ENCODE measurements at regions of chr10 and their contacts with region 1.

Region 1: GRCh38 chr10:60208676-60209269 is 180.9 kb downstream of the ANK3 start:
- DNase-seq: peak in 1 of 2 donors; percentile 58
- H3K4me3 ChIP-seq: no peak overlapping the region
- H3K27ac ChIP-seq: no peak overlapping the region
- H3K4me1 ChIP-seq: no peaks in the 10 kb centered on the region
- H3K27me3 ChIP-seq: no peaks in the 10 kb centered on the region
- CTCF ChIP-seq: peak in 5 of 7 experiments; percentile 60 to 66 (median 63)
- EP300 ChIP-seq: no peak
- POLR2A ChIP-seq: no peak

Region 2: GRCh38 chr10:60114765-60115586 is 93.8 kb before region 1 on chr10:
- intact Hi-C with region 1: loop called (anchors 10 kb)
- DNase-seq: peak in 1 of 2 donors; percentile 69
- H3K4me3 ChIP-seq: no peak overlapping the region
- H3K27ac ChIP-seq: no peak overlapping the region
- H3K4me1 ChIP-seq: peaks cover 0 to 11% (median 5%) of the 10 kb centered on the region in 4 donors
- H3K27me3 ChIP-seq: no peaks in the 10 kb centered on the region
- CTCF ChIP-seq: peak in 5 of 7 experiments; percentile 30 to 48 (median 37)
- EP300 ChIP-seq: no peak
- POLR2A ChIP-seq: no peak

Region 3: GRCh38 chr10:60434418-60435046 is 225.8 kb after region 1 on chr10:
- intact Hi-C with region 1: loop called (anchors 10 kb)
- DNase-seq: peak in 1 of 2 donors; percentile 86
- H3K4me3 ChIP-seq: no peak overlapping the region
- H3K27ac ChIP-seq: no peak overlapping the region
- H3K4me1 ChIP-seq: peaks cover 0 to 11% (median 0%) of the 10 kb centered on the region in 4 donors
- H3K27me3 ChIP-seq: no peaks in the 10 kb centered on the region
- CTCF ChIP-seq: peak in 5 of 7 experiments; percentile 49 to 71 (median 63)
- EP300 ChIP-seq: no peak
- POLR2A ChIP-seq: no peak